Mammary epithelial cell (primary cell): ENCODE measurements at regions of chr10 and their contacts with region 1.

Region 1: GRCh38 chr10:72319416-72320254 is 35.1 kb downstream of the DNAJB12 start:
- DNase-seq: peak; percentile 99
- H3K4me3 ChIP-seq: peak overlapping the region in 1 of 3 experiments; percentile 33
- H3K27ac ChIP-seq: peak overlapping the region; percentile 99
- H3K4me1 ChIP-seq: peaks cover 77% of the 10 kb centered on the region
- H3K27me3 ChIP-seq: no peaks in the 10 kb centered on the region
- CTCF ChIP-seq: peak in 1 of 2 donors; percentile 5

Region 2: GRCh38 chr10:71766702-71767419 is 552.8 kb before region 1 on chr10:
- CTCF ChIA-PET with region 1: no interaction called
- dilution Hi-C with region 1: loop called (anchors 10 kb)
- in situ Hi-C with region 1: no loop called
- intact Hi-C with region 1: no loop called
- DNase-seq: peak; percentile 89
- H3K4me3 ChIP-seq: no peak overlapping the region
- H3K27ac ChIP-seq: peak overlapping the region; percentile 92
- H3K4me1 ChIP-seq: peaks cover 57% of the 10 kb centered on the region
- H3K27me3 ChIP-seq: no peaks in the 10 kb centered on the region
- CTCF ChIP-seq: no peak

Region 3: GRCh38 chr10:72292223-72292691 is 27.4 kb before region 1 on chr10:
- CTCF ChIA-PET with region 1: no interaction called
- dilution Hi-C with region 1: no loop called
- in situ Hi-C with region 1: no loop called
- intact Hi-C with region 1: loop called (anchors 1 kb)
- DNase-seq: peak; percentile 99
- H3K4me3 ChIP-seq: no peak overlapping the region
- H3K27ac ChIP-seq: peak overlapping the region; percentile 92
- H3K4me1 ChIP-seq: peaks cover 29% of the 10 kb centered on the region
- H3K27me3 ChIP-seq: no peaks in the 10 kb centered on the region
- CTCF ChIP-seq: no peak

Region 4: DNA sequence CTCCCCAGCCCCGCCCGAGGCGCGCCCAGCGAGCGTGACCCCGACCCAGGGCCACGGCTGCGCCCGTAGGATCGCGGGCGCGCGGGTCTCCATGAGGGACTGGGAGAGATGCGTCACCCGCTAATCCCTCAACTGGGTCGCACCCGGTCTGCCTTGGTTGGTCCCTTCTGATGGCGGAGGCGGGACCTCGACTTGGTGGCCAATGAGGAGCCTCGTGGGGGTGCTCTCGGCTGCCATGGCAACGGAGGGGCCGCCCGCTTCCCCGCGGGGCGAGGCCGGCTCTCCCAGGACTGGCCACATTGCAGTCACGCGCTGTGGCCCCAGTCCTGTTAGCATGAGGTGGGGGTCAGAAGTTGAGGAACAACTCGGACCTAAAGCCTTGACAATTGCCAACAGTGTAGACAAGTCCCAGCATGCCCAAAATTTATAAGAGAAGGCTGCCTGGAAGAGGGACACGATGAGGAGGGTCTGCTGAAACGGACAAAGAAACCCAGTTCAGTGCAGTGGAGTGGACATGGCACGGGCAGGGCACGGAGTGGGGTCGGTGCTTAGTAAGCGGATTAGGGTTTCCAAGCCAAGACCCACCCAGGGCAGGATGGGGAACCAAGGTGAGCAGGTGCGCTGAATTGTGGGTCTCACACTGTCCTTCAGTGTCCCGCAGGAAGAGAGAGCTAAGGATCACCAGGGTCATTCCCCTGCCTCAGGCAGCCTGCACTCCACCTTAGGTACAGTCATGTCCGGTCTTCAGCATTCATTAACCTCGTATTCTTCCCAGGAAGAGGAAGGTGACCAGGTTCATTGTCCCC is 21.5 kb before region 1 on chr10:
- CTCF ChIA-PET with region 1: no interaction called
- dilution Hi-C with region 1: no loop called
- in situ Hi-C with region 1: no loop called
- intact Hi-C with region 1: loop called (anchors 1 kb)
- DNase-seq: peak; percentile 93
- H3K4me3 ChIP-seq: peak overlapping the region; percentile 33 to 53 (median 40)
- H3K27ac ChIP-seq: peak overlapping the region; percentile 94
- H3K4me1 ChIP-seq: peaks cover 25% of the 10 kb centered on the region
- H3K27me3 ChIP-seq: no peaks in the 10 kb centered on the region
- CTCF ChIP-seq: no peak

Region 5: GRCh38 chr10:72407927-72408600 is 88.4 kb after region 1 on chr10:
- CTCF ChIA-PET with region 1: no interaction called
- dilution Hi-C with region 1: no loop called
- in situ Hi-C with region 1: no loop called
- intact Hi-C with region 1: no loop called
- DNase-seq: no peak
- H3K4me3 ChIP-seq: no peak overlapping the region
- H3K27ac ChIP-seq: no peak overlapping the region
- H3K4me1 ChIP-seq: no peaks in the 10 kb centered on the region
- H3K27me3 ChIP-seq: no peaks in the 10 kb centered on the region
- CTCF ChIP-seq: no peak